ENCODE measurements at regions of chr20 and their contacts with region 1.

Region 1: DNA sequence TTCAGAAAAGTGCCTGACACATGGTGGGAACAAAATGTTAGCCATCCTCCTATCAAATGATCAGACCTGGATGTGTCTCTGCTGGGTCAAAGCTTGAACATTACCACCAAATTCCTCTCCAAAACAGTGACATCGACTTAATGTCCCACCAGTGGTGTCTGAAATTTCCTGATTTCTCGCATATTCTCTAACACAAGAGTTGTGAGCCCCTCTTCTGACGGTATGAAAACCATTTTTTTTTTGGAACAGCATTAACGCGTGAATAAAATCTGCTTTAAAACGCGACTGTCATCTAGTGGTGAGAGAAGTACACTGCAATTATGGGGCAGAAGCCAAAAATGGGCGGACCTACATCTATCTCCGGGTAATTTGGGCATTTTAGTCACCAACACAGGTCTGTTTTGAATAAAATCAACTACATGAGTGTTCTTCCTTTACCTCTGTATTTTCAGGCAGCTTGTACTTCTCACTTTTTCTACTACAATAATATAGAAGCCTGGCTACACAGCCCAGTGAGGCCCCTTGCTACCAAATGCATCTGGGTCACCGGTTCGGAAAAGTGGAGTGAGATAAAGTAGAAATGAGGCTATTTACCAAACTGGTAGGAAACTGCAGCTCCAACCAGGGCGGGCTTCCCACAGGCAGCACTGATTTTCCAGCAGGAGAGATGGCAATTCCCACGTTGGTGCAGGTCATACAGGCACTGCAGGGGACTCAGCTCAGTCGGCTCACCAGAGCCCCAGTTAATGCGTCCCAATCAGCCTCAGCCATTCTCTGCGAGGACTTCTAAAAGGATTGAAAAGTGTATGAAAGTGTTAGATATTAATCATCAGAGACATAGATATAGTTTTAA is 27.4 kb downstream of the MGME1 start:
- DNase-seq: peak; percentile 58 to 66
- ATAC-seq: peak; percentile 64 to 81
- H3K4me3 ChIP-seq: no peak overlapping the region
- H3K27ac ChIP-seq: no peak overlapping the region
- H3K4me1 ChIP-seq: peaks cover 4% of the 10 kb centered on the region; the same call in 2 of the 3 replicates
- CTCF ChIP-seq: peak; percentile 98
- EP300 ChIP-seq: no peak
- POLR2A ChIP-seq: no peak
- RAD21 ChIP-seq: peak; percentile 90 to 92

Region 2: DNA sequence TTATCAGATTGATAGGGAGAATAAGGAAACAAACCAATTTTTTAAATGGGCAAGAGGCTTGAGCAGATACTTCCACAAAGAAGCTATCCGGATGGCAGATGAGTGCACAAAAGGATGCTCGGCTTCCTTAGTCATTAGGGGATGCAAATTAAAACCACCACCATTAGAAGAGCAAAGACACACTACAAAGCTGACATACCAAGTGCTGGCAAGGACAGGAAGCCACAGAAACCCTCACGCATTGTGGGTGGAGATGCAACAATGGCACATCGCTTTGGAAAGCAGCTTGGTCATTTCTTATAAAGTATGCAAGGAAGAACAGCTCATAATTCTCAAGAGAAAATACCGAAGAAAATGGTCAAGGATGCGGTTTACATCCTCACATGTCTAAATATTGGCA is 484.8 kb before region 1 on chr20:
- CTCF ChIA-PET with region 1: interaction called, 27 read pairs
- POLR2A ChIA-PET with region 1: no interaction called
- DNase-seq: no peak
- ATAC-seq: no peak
- H3K4me3 ChIP-seq: no peak overlapping the region
- H3K27ac ChIP-seq: no peak overlapping the region
- H3K4me1 ChIP-seq: no peaks in the 10 kb centered on the region
- CTCF ChIP-seq: no peak
- EP300 ChIP-seq: no peak
- POLR2A ChIP-seq: no peak
- RAD21 ChIP-seq: no peak

Region 3: DNA sequence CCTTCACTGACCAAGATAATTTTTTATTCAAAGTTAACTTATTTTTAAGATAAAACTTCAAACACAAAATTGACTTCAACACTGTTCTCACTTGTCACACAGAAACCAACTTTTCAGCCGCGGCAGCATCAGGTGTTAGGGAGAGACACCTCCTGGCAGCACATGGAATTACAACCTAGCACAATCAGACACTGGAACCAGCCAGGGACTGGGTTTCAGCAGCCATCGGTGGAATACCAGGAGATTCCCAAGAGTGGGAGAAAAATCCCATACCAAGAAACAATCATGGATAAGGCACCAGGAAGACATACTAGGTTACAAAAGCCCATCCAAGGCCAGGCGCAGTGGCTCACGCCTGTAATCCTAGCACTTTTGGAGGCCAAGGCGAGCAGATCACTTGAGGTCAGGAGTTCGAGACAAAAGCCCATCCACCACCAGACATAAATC is 97.6 kb before region 1 on chr20:
- CTCF ChIA-PET with region 1: no interaction called
- POLR2A ChIA-PET with region 1: no interaction called
- DNase-seq: peak; percentile 73 to 88
- ATAC-seq: peak; percentile 69 to 82; a peak in 4 of 6 replicates
- H3K4me3 ChIP-seq: no peak overlapping the region
- H3K27ac ChIP-seq: no peak overlapping the region
- H3K4me1 ChIP-seq: peaks cover 8% of the 10 kb centered on the region; the same call in 2 of the 3 replicates
- CTCF ChIP-seq: peak; percentile 95
- EP300 ChIP-seq: no peak
- POLR2A ChIP-seq: no peak
- RAD21 ChIP-seq: peak; percentile 96 to 97

Region 4: GRCh38 chr20:17938871-17939619 is 57.1 kb before region 1 on chr20:
- CTCF ChIA-PET with region 1: interaction called, 10 read pairs
- POLR2A ChIA-PET with region 1: no interaction called
- DNase-seq: peak; percentile 58 to 75
- ATAC-seq: peak; percentile 68 to 83
- H3K4me3 ChIP-seq: no peak overlapping the region
- H3K27ac ChIP-seq: no peak overlapping the region
- H3K4me1 ChIP-seq: no peaks in the 10 kb centered on the region; the same call in 2 of the 3 replicates
- CTCF ChIP-seq: peak; percentile 61
- EP300 ChIP-seq: no peak
- POLR2A ChIP-seq: no peak
- RAD21 ChIP-seq: peak; percentile 74 to 75

Region 5: GRCh38 chr20:17958373-17959256 is 37.6 kb before region 1 on chr20:
- CTCF ChIA-PET with region 1: interaction called, 17 read pairs
- POLR2A ChIA-PET with region 1: no interaction called
- DNase-seq: no peak
- ATAC-seq: peak; percentile 41 to 52; a peak in 5 of 6 replicates
- H3K4me3 ChIP-seq: no peak overlapping the region
- H3K27ac ChIP-seq: peak overlapping the region in 1 of 2 experiments; percentile 8; a peak in 1 of 6 replicates
- H3K4me1 ChIP-seq: peaks cover 63% of the 10 kb centered on the region
- CTCF ChIP-seq: no peak
- EP300 ChIP-seq: no peak
- POLR2A ChIP-seq: no peak
- RAD21 ChIP-seq: no peak

Region 6: GRCh38 chr20:17968366-17969279 is 27.6 kb before region 1 on chr20 and contains the starts of genes MGME1 and SNX5:
- CTCF ChIA-PET with region 1: interaction called, 10 read pairs
- POLR2A ChIA-PET with region 1: no interaction called
- DNase-seq: peak; percentile 98 to 100
- ATAC-seq: peak; percentile 88 to 94
- H3K4me3 ChIP-seq: peak within 1 kb of the TSS; percentile 79
- H3K27ac ChIP-seq: peak within 1 kb of the TSS; percentile 96 to 97
- H3K4me1 ChIP-seq: peaks cover 57% of the 10 kb centered on the region
- CTCF ChIP-seq: no peak
- EP300 ChIP-seq: no peak
- POLR2A ChIP-seq: peak; percentile 97
- RAD21 ChIP-seq: no peak
- polyA plus RNA-seq, gene MGME1: 41.8 and 47.9 TPM in 2 replicates
- polyA plus RNA-seq, gene SNX5: 275 and 342 TPM in 2 replicates

Region 7: GRCh38 chr20:17985388-17986018 is 10.7 kb before region 1 on chr20:
- CTCF ChIA-PET with region 1: interaction called, 36 read pairs
- POLR2A ChIA-PET with region 1: interaction called, 3 read pairs
- DNase-seq: no peak
- ATAC-seq: peak; percentile 47 to 73; a peak in 5 of 6 replicates
- H3K4me3 ChIP-seq: no peak overlapping the region
- H3K27ac ChIP-seq: no peak overlapping the region
- H3K4me1 ChIP-seq: 0 out of 3 replicates have a peak, but pooled peaks cover 5% of the 10 kb centered on the region
- CTCF ChIP-seq: no peak
- EP300 ChIP-seq: no peak
- POLR2A ChIP-seq: no peak
- RAD21 ChIP-seq: no peak